ENCODE measurements at regions of chr11 and their contacts with region 1.

Region 1: GRCh38 chr11:2202055-2202899 is 30.7 kb upstream of the TH start:
- DNase-seq: peak; percentile 100
- H3K4me3 ChIP-seq: peak overlapping the region; percentile 32
- H3K4me3 Mint-ChIP-seq: peak overlapping the region; percentile 74
- H3K27ac Mint-ChIP-seq: peak overlapping the region; percentile 73
- H3K4me1 ChIP-seq: peaks cover 69% of the 10 kb centered on the region
- H3K4me1 Mint-ChIP-seq: peaks cover 49% of the 10 kb centered on the region
- H3K27me3 ChIP-seq: no peaks in the 10 kb centered on the region
- H3K27me3 Mint-ChIP-seq: no peaks in the 10 kb centered on the region
- CTCF ChIP-seq: no peak

Region 2: DNA sequence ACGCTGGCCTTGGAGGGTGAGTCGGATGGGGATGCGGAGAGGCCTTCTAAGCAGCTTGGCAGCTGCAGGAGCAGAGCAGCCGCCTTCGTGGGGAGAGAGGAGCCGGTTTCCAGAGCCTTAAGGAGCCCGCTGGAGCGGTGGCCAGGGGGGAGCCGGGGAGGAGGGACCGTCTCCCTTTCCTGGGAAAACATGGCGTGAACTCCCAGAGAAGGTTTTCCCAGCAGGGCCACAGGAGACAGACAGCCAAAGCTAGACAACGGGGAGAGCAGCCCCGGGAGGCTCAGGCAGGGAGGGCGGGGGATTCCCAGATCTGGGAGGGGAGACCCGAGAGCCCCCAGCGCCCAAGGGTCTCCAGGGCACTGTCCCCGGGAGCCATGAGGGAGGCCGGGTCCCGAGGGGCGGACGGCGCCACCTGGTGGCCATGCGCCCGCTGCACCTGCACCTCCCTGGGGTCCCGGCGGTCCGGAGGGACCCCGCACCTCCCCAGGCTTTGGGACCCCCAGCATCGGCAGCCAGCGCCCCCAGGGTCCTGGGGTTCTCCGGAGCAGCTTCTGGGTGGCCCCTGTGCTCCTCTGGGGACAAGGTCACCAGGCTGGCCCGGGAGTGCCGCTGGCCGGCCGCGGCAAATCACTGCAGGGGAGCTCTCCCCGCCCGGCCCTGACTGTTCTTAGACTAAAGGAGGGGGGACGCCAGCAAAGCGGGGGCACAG is 369.9 kb before region 1 on chr11:
- CTCF ChIA-PET with region 1: no interaction called
- POLR2A ChIA-PET with region 1: no interaction called
- intact Hi-C with region 1: loop called (anchors 1 kb)
- DNase-seq: peak in 1 of 2 experiments; percentile 70
- H3K4me3 ChIP-seq: no peak overlapping the region
- H3K4me3 Mint-ChIP-seq: peak overlapping the region; percentile 33
- H3K27ac Mint-ChIP-seq: peak overlapping the region; percentile 98
- H3K4me1 ChIP-seq: peaks cover 78% of the 10 kb centered on the region
- H3K4me1 Mint-ChIP-seq: peaks cover 50% of the 10 kb centered on the region
- H3K27me3 ChIP-seq: no peaks in the 10 kb centered on the region
- H3K27me3 Mint-ChIP-seq: no peaks in the 10 kb centered on the region
- CTCF ChIP-seq: peak; percentile 80 to 95

Region 3: DNA sequence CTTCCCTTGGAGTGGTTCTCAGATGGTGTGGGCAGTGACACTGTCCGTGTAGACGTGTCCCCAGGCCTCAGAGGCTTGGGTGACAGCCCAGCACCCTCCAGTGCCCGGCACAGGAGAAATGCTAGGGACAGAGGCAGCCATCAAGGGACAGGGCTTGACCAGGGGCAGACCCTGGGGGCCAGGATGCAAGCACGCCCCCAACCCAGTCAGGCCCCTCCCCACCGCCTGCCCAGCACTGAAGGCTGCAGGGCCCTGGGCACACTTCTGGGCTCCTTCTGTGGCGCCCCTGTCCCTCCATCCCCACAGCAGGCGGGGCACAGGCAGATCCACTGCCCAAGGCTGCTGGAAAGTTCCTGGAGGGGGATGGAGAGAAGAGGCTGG is 74.2 kb before region 1 on chr11:
- CTCF ChIA-PET with region 1: interaction called, 3 read pairs
- POLR2A ChIA-PET with region 1: interaction called, 6 read pairs
- intact Hi-C with region 1: loop called (anchors 1 kb)
- DNase-seq: peak in 1 of 2 experiments; percentile 75
- H3K4me3 ChIP-seq: no peak overlapping the region
- H3K4me3 Mint-ChIP-seq: no peak overlapping the region
- H3K27ac Mint-ChIP-seq: no peak overlapping the region
- H3K4me1 ChIP-seq: no peaks in the 10 kb centered on the region
- H3K4me1 Mint-ChIP-seq: peaks cover 13% of the 10 kb centered on the region
- H3K27me3 ChIP-seq: no peaks in the 10 kb centered on the region
- H3K27me3 Mint-ChIP-seq: no peaks in the 10 kb centered on the region
- CTCF ChIP-seq: no peak

Region 4: DNA sequence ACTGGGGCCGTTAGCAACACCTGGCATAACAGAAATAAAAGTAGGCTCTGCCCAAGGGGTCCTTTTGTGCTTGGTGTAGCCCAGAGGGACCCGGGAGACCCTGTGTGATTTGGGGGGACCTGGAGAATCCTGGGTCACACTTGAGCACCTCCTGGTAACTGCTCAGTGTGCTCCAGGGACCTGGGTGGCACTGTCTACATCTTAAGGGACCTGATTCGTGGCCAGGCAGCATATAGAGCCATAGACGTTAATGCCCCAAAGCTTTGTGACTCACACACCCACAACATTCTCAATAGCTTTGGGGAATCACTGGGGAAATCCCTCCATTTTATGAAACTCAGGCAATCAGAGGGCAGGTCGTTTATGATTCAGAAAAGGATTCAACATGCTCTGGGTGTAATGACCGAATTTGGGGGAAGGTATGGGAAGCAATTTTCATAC is 59.5 kb before region 1 on chr11:
- CTCF ChIA-PET with region 1: interaction called, 7 read pairs
- POLR2A ChIA-PET with region 1: interaction called, 5 read pairs
- intact Hi-C with region 1: loop called (anchors 2 kb)
- DNase-seq: no peak
- H3K4me3 ChIP-seq: no peak overlapping the region
- H3K4me3 Mint-ChIP-seq: peak overlapping the region; percentile 52
- H3K27ac Mint-ChIP-seq: peak overlapping the region; percentile 24
- H3K4me1 ChIP-seq: peaks cover 10% of the 10 kb centered on the region
- H3K4me1 Mint-ChIP-seq: peaks cover 9% of the 10 kb centered on the region
- H3K27me3 ChIP-seq: peaks cover 2% of the 10 kb centered on the region
- H3K27me3 Mint-ChIP-seq: peaks cover 30% of the 10 kb centered on the region
- CTCF ChIP-seq: no peak

Region 5: DNA sequence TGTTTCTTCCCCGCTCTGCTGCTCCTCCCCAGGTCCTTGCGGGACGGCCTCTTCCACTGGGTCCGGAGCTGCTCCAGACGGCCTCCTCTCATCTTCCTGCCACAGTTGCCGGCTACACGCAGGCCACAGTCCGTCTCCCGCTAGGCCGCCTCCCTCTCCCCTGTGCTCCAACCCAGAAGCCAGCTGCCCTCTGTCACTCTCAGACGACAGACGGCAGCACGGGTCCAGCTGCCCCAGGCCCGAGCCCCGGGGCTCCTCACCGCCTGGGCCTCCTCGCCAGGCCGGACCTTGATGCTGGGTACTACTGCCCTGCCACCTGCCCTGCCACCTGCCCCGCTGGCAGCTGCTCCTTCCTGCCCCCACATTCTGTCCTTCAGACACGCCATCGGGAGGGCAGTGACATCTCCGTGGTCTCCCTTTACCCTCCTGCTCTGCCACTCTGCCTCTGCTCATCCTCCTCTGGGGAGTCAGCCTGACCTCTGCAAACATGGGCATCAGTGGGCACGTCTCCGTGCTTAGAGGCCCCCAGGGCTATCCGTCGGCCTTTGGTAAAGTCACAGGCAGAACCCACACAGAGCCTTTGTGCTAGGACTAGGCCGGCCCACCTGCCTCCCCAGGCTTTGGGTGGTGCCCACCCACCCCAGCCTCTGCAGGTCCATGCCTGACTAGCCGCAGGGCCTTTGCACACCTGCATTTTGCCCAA is 12.4 kb after region 1 on chr11:
- CTCF ChIA-PET with region 1: interaction called, 32 read pairs
- POLR2A ChIA-PET with region 1: interaction called, 26 read pairs
- intact Hi-C with region 1: loop called (anchors 1 kb)
- DNase-seq: peak in 1 of 2 experiments; percentile 73
- H3K4me3 ChIP-seq: no peak overlapping the region
- H3K4me3 Mint-ChIP-seq: no peak overlapping the region
- H3K27ac Mint-ChIP-seq: peak overlapping the region; percentile 75
- H3K4me1 ChIP-seq: peaks cover 86% of the 10 kb centered on the region
- H3K4me1 Mint-ChIP-seq: peaks cover 39% of the 10 kb centered on the region
- H3K27me3 ChIP-seq: no peaks in the 10 kb centered on the region
- H3K27me3 Mint-ChIP-seq: no peaks in the 10 kb centered on the region
- CTCF ChIP-seq: no peak

Region 6: DNA sequence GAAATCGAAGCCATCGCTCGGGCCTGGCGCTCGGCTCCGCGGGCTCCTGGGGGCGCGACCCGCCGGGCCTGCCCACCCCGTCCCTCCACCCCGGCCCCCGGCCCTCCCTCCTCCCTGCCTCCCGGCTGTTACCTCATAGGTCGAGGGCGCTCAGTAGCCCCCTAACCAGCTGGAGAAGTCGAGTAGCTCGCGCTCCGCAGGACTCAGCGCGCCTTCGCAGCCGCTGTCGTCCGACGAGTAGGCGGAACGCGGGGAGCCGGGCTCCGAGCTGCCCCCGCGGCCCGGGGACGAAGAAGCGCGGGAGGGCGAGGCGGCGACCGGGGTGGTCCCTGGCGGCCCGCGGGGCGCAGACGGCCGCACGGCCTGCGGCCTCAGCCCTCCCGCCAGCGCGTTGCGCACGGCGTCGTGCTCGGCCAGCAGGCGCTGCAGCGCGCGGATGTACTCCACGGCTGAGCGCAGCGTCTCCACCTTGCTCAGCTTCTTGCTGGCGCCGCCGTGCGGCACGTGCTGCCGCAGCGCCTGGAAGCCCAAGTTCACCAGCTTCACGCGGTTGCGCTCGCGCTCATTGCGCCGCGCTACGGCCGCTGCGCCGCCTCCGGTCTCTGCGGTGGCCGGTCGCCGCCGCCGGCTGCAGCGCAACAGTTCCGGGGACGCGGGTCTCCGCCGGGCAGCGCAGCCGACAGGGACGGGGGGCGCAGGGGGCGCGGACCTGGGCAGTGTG is 67.5 kb after region 1 on chr11:
- CTCF ChIA-PET with region 1: interaction called, 4 read pairs
- POLR2A ChIA-PET with region 1: interaction called, 26 read pairs
- intact Hi-C with region 1: loop called (anchors 1 kb)
- DNase-seq: peak; percentile 85 to 87
- H3K4me3 ChIP-seq: peak overlapping the region; percentile 76
- H3K4me3 Mint-ChIP-seq: peak overlapping the region; percentile 87
- H3K27ac Mint-ChIP-seq: peak overlapping the region; percentile 88
- H3K4me1 ChIP-seq: peaks cover 27% of the 10 kb centered on the region
- H3K4me1 Mint-ChIP-seq: peaks cover 10% of the 10 kb centered on the region
- H3K27me3 ChIP-seq: no peaks in the 10 kb centered on the region
- H3K27me3 Mint-ChIP-seq: no peaks in the 10 kb centered on the region
- CTCF ChIP-seq: peak in 1 of 2 experiments; percentile 72

Region 7: GRCh38 chr11:2400069-2400760 is 197.9 kb after region 1 on chr11 and contains the start of gene TSSC4:
- CTCF ChIA-PET with region 1: interaction called, 9 read pairs
- POLR2A ChIA-PET with region 1: interaction called, 4 read pairs
- intact Hi-C with region 1: loop called (anchors 5 kb)
- DNase-seq: peak; percentile 99 to 100
- H3K4me3 ChIP-seq: peak within 1 kb of the TSS; percentile 100
- H3K4me3 Mint-ChIP-seq: peak within 1 kb of the TSS; percentile 89
- H3K27ac Mint-ChIP-seq: peak within 1 kb of the TSS; percentile 92
- H3K4me1 ChIP-seq: peaks cover 14% of the 10 kb centered on the region
- H3K4me1 Mint-ChIP-seq: no peaks in the 10 kb centered on the region
- H3K27me3 ChIP-seq: no peaks in the 10 kb centered on the region
- H3K27me3 Mint-ChIP-seq: no peaks in the 10 kb centered on the region
- CTCF ChIP-seq: peak; percentile 94 to 97
- total RNA-seq, gene TSSC4: 46.2 and 60.9 TPM in 2 replicates